GM13976 (cell line): ENCODE measurements at regions of chr6 and their contacts with region 1.

Region 1: GRCh38 chr6:99746261-99746895 is 139.7 kb downstream of the PRDM13 start:
- DNase-seq: peak; percentile 43
- CTCF ChIP-seq: peak; percentile 73

Region 2: DNA sequence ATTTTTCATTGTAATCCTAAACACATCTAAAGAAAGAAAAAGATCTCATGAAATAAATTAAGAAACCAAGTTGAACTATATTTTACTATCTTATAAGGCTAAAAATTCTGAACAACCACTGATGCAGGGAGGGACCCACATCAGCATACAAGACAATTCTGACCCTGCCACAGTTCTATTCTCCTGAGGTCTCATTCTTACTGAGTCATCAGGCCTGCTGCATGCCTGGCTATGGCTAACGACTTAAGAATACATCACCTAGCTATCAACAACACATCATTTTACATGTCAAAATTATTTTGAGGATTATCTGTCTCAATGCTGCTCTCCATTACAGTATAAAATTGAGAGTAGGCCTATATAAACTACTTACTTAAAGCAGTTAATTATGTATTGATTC is 851.6 kb before region 1 on chr6:
- in situ Hi-C with region 1: no loop called
- DNase-seq: no peak
- CTCF ChIP-seq: no peak

Region 3: DNA sequence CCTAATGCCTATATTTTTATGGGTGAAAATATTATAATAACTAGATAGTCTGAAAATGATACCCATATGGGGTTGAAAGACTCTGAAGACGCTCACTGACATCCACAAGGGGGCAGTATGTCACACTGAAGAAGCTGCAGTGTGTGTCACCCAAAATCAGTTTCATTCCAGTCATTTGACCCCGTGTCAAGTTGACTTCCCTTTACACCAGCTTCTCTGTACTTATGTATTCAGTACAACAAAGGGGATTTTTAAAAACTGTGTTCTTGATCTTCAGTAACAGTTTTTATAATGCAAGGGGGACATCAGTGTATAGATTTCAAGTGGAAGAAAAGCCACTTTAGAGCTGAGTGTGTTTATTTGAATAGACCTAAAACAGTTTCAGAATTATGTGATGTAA is 416.2 kb before region 1 on chr6:
- in situ Hi-C with region 1: loop called (anchors 25 kb)
- DNase-seq: peak; percentile 74
- CTCF ChIP-seq: peak; percentile 68

Region 4: GRCh38 chr6:99471638-99472037 is 274.7 kb before region 1 on chr6:
- in situ Hi-C with region 1: loop called (anchors 5 kb)
- DNase-seq: no peak
- CTCF ChIP-seq: no peak

Region 5: GRCh38 chr6:99590728-99591672 is 155.4 kb before region 1 on chr6:
- in situ Hi-C with region 1: loop called (anchors 10 kb)
- DNase-seq: peak; percentile 31
- CTCF ChIP-seq: no peak